Calu3 (cell line): ENCODE measurements at regions of chr2 and their contacts with region 1.

Region 1: DNA sequence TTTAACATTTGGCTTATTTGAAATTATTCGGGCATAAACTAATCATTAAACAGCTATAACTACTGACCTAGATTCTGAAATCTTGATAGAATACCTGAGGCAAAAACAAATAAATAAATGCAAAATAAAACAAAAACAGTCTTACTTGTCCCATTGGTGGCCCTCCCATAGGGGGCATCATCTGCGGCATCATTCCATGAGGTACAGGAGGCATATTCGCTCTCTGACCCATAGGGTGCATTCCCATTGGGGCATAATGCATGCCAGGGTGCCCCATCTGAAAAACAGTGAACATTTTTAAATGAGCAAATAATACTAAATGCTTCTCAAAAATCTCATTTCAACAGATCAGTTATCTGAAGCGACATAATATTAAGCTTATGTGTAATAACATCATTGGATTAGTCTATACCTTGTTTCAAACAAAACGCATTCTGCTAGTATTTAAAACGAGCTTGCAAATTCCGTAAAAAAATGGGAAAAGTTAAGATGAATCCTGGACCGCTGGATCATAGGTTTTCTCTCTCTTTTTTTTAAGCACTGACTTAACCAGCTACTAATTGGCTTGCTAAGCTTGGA is 1.3 kb downstream of the PRPF40A start:
- DNase-seq: peak; percentile 65
- H3K4me3 Mint-ChIP-seq: peak overlapping the region; percentile 96
- H3K27ac Mint-ChIP-seq: peak overlapping the region; percentile 96
- H3K4me1 Mint-ChIP-seq: no peaks in the 10 kb centered on the region
- H3K27me3 Mint-ChIP-seq: no peaks in the 10 kb centered on the region
- CTCF ChIP-seq: peak; percentile 84

Region 2: DNA sequence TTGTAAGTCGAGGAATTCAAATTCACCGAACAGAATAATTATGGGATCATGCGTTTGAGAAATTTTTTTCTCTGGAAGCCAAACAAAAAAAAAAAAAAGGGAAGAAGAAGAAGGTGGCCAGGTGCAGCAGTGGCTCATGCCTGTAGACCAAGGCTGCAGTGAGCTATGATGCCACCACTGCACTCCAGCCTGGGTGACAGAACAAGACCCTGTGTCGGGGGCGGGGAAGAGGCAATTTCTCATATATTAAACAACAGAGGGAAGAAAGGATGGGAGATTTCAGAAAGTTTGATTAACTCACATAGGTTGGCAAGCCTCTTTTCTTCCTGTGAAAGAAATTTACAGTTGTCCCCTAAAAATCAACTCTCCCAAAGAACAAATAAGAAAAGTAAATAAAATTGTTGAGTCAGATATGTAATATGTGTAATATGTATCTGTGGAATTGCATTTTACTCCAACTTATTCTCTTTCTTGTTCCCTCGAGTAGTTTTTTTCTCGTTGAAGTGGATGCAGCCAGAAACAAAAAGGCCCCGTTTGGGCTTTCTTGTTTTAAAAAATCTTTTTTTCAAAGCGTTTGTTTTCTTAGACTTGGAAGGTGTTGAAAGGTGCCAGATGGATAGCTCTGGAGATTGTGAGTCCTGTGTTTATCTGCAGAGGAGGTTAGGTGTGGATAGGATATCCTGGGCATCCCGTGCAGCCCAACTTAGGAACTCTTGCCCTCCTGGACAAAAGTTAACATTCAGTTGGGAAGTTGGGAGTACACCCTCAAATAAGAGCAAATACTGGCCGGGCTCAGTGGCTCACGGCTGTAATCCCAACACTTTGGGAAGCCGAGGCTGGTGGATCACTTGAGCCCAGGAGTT is 406.4 kb before region 1 on chr2:
- CTCF ChIA-PET with region 1: no interaction called
- intact Hi-C with region 1: no loop called
- DNase-seq: no peak
- H3K4me3 Mint-ChIP-seq: no peak overlapping the region
- H3K27ac Mint-ChIP-seq: no peak overlapping the region
- H3K4me1 Mint-ChIP-seq: peaks cover 11% of the 10 kb centered on the region
- H3K27me3 Mint-ChIP-seq: no peaks in the 10 kb centered on the region
- CTCF ChIP-seq: no peak

Region 3: GRCh38 chr2:152594022-152594766 is 121.7 kb before region 1 on chr2:
- CTCF ChIA-PET with region 1: no interaction called
- intact Hi-C with region 1: no loop called
- DNase-seq: no peak
- H3K4me3 Mint-ChIP-seq: no peak overlapping the region
- H3K27ac Mint-ChIP-seq: no peak overlapping the region
- H3K4me1 Mint-ChIP-seq: no peaks in the 10 kb centered on the region
- H3K27me3 Mint-ChIP-seq: no peaks in the 10 kb centered on the region
- CTCF ChIP-seq: no peak

Region 4: DNA sequence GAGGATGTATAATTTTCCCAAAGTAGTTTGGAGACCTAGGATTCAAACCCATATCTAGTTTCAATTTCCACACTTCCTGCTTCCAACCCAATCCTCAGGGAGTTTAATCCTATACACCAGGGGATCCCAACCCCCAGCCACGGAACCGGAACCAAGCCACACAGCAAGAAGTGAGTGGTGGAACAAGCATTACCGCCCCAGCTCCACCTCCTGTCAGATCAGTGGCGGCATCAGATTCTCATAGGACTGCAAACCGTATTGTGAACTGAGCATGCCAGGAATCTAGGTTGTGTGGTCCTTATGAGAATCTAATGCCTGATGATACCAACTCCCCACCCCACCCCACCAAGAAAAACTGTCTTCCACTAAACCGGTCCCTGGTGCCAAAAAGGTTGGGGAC is 51.2 kb before region 1 on chr2:
- CTCF ChIA-PET with region 1: no interaction called
- intact Hi-C with region 1: no loop called
- DNase-seq: no peak
- H3K4me3 Mint-ChIP-seq: no peak overlapping the region
- H3K27ac Mint-ChIP-seq: no peak overlapping the region
- H3K4me1 Mint-ChIP-seq: no peaks in the 10 kb centered on the region
- H3K27me3 Mint-ChIP-seq: no peaks in the 10 kb centered on the region
- CTCF ChIP-seq: no peak

Region 5: DNA sequence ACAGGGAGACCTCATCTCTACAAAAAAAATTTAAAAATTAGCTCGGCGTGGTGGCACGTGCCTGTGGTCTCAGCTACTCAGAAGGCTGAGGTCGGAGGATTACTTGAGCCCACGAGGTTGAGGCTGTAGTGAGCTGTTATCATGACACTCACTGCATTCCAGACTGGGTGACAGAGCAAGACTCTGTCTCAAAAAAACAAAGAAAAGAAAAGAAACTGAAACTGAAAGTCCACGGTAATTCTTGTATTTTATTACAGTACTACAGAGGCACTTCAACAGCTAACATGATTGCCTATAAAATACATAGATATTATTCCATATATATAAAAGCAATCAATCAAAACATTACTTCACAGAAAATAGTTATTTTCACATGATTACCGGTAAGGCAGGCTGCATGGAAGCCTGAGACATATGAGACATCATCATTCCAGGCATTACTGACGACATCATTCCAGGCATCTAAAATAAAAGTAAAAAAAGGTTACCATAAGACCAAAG is 21.7 kb before region 1 on chr2:
- CTCF ChIA-PET with region 1: no interaction called
- intact Hi-C with region 1: loop called (anchors 2 kb)
- DNase-seq: no peak
- H3K4me3 Mint-ChIP-seq: peak overlapping the region; percentile 52
- H3K27ac Mint-ChIP-seq: peak overlapping the region; percentile 76
- H3K4me1 Mint-ChIP-seq: no peaks in the 10 kb centered on the region
- H3K27me3 Mint-ChIP-seq: no peaks in the 10 kb centered on the region
- CTCF ChIP-seq: no peak

Region 6: DNA sequence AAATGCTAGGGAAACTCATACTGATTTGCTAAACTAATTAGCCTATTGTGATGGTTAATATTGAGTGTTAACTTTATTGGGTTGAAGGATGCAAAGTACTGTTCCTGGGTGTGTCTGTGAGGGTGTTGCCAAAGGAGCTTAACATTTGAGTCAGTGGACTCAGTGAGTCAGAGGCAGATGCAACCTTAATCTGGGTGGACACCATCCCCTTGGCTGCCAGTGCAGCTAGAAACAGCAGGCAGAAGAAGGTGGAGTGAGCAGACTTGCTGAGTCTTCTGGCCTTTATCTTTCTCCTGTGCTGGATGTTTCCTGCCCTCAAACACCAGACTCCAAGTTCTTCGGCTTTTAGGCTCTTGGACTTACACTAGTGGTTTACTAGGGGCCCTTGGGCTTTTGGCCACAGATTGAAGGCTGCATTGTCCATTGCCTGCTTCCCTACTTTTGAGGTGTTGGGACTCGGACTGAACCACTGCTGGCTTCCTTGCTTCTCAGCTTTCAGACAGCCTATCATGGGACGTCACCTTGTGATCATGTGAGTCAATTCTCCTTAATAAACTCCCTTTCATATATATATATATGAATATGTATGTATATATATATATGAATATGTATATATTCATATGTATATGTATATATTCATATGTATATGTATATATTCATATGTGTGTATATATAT is 692.9 kb after region 1 on chr2:
- CTCF ChIA-PET with region 1: no interaction called
- intact Hi-C with region 1: no loop called
- DNase-seq: no peak
- H3K4me3 Mint-ChIP-seq: no peak overlapping the region
- H3K27ac Mint-ChIP-seq: no peak overlapping the region
- H3K4me1 Mint-ChIP-seq: no peaks in the 10 kb centered on the region
- H3K27me3 Mint-ChIP-seq: no peaks in the 10 kb centered on the region
- CTCF ChIP-seq: no peak